IMR-90 (cell line): ENCODE measurements at regions of chr18 and their contacts with region 1.

Region 1: DNA sequence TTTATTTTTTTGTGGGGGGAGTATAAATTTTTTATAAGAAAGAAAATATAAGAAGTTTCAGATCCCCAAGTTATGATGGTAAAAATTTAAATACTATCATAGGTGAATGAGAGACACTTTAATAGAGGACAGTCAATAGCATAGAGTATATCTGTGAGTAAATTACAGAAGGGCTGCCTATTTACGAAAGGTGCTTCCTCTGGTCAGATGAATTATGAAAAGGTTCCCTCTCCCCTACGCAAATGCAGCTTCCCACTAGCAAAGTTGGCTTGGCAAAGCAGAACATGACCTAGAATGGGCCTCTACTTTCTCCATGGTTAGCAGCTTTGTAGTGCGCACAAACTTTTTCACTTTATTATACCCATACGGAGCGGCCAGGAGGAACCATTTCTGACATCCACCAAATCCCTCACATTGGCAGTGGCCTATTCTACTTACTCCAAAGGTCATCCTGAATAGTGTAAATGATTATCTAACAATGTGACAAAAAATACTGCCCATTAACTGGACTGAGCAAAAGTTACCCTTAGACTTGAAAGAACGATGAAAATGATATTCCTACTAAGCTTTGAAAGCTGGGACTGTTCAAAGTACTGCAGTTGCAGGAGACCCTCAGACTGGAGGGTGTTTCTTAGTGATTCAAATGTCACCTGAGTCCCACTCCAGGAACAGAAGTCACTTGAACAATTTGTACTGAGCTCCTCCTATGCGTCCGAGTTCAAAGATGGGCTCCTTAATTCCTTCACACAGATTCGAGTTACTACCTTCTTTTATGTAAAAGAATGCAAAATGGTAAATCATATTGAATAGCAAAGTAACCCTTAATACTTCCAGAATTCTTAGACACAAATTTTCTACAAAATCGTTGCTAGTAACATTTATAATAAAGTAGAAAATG is 148.5 kb downstream of the NOL4 start:
- DNase-seq: no peak
- ATAC-seq: no peak
- H3K4me3 ChIP-seq: no peak overlapping the region
- H3K27ac ChIP-seq: no peak overlapping the region
- H3K4me1 ChIP-seq: no peaks in the 10 kb centered on the region
- H3K27me3 ChIP-seq: no peaks in the 10 kb centered on the region
- CTCF ChIP-seq: no peak
- POLR2A ChIP-seq: no peak
- RAD21 ChIP-seq: no peak

Region 2: GRCh38 chr18:34018336-34018735 is 57.9 kb before region 1 on chr18:
- CTCF ChIA-PET with region 1: no interaction called
- POLR2A ChIA-PET with region 1: no interaction called
- dilution Hi-C with region 1: no loop called
- in situ Hi-C with region 1: no loop called
- intact Hi-C with region 1: loop called (anchors 2 kb)
- DNase-seq: no peak
- ATAC-seq: no peak
- H3K4me3 ChIP-seq: no peak overlapping the region
- H3K27ac ChIP-seq: no peak overlapping the region
- H3K4me1 ChIP-seq: no peaks in the 10 kb centered on the region
- H3K27me3 ChIP-seq: no peaks in the 10 kb centered on the region
- CTCF ChIP-seq: no peak
- POLR2A ChIP-seq: no peak
- RAD21 ChIP-seq: no peak

Region 3: DNA sequence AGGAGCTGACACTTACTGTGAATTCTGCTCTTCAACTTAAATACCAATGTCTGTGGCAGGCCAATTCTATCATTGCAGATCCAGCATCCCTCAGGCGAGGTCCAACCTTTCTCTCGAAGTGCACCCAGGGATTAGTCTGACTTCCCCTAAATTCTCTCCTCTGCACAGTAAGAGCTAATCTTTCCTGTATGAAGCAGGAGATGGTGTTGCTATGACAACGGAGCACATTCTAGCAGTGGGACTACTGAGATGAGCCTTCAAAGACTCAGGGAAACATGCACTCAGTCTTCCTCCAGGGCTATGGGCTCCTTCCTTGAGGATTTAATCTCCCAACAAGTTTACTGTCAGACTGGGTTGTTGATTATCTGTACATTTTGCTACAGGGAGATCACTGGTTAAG is 27.8 kb before region 1 on chr18:
- CTCF ChIA-PET with region 1: no interaction called
- POLR2A ChIA-PET with region 1: no interaction called
- dilution Hi-C with region 1: no loop called
- in situ Hi-C with region 1: no loop called
- intact Hi-C with region 1: no loop called
- DNase-seq: no peak
- ATAC-seq: no peak
- H3K4me3 ChIP-seq: no peak overlapping the region
- H3K27ac ChIP-seq: no peak overlapping the region
- H3K4me1 ChIP-seq: no peaks in the 10 kb centered on the region
- H3K27me3 ChIP-seq: no peaks in the 10 kb centered on the region
- CTCF ChIP-seq: no peak
- POLR2A ChIP-seq: no peak
- RAD21 ChIP-seq: no peak

Region 4: DNA sequence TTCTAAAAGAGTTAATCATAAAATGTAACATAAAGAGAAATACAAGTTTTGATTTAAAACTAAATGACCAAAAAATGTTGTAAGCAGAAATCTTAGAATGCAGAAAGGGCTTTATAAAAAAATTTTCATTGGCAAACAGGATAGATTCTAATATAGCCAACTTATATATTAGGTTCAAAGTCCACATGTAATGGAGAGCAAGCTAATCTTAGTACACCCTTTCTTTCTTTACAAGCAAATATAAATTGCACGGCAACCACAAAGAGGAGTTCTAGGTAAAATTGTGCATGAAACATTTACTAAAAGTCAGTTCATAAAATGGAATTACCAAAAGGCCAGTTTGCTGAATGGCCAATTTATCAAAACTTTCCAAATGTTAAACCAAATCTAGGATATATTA is 17.9 kb after region 1 on chr18:
- CTCF ChIA-PET with region 1: no interaction called
- POLR2A ChIA-PET with region 1: no interaction called
- dilution Hi-C with region 1: no loop called
- in situ Hi-C with region 1: no loop called
- intact Hi-C with region 1: no loop called
- DNase-seq: no peak
- ATAC-seq: no peak
- H3K4me3 ChIP-seq: no peak overlapping the region
- H3K27ac ChIP-seq: no peak overlapping the region
- H3K4me1 ChIP-seq: no peaks in the 10 kb centered on the region
- H3K27me3 ChIP-seq: no peaks in the 10 kb centered on the region
- CTCF ChIP-seq: no peak
- POLR2A ChIP-seq: no peak
- RAD21 ChIP-seq: no peak